ENCODE measurements at regions of chr1 and their contacts with region 1.

Region 1: DNA sequence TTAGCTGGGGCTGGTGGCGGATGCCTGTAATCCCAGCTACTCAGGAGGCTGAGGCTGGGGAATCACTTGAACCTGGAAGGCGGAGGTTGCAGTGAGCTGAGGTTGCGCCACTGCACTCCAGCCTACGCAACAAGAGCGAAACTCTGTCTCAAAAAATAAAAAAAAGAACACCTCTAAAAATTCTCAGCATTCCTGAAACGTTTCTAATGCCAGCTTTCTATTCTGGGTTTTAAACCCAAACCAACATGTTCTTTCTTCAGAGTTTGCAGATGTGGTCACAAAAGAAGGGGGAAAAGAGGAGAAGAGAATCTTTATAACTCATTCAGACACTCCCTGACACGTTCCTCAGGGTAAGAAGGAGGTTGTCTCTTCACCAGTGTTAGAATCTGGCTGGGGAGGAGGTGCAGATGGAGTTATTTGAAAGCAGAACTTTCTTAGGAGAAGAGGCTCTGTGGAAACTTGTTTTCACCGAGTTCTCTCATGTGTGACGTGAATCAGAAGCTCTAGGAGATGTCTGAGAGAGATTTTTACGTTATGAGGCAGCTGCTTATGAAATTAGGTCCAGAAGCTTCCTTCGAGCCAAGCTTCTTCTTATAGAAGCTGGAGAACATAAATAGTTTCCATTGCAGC is 17.8 kb upstream of the CNR2 start:
- DNase-seq: peak; percentile 65
- ATAC-seq: peak; percentile 83
- H3K4me3 ChIP-seq: peak overlapping the region in 4 of 5 experiments; percentile 2 to 60 (median 28)
- H3K4me3 Mint-ChIP-seq: peak overlapping the region; percentile 85
- H3K27ac ChIP-seq: peak overlapping the region; percentile 46 to 76
- H3K27ac Mint-ChIP-seq: peak overlapping the region; percentile 98
- H3K4me1 ChIP-seq: peaks cover 22 to 37% of the 10 kb centered on the region in 2 donors
- H3K4me1 Mint-ChIP-seq: peaks cover 38% of the 10 kb centered on the region
- H3K27me3 ChIP-seq: no peaks in the 10 kb centered on the region
- H3K27me3 Mint-ChIP-seq: no peaks in the 10 kb centered on the region
- CTCF ChIP-seq: no peak

Region 2: GRCh38 chr1:23838401-23838866 is 92.5 kb before region 1 on chr1:
- CTCF ChIA-PET with region 1: no interaction called
- POLR2A ChIA-PET with region 1: no interaction called
- intact Hi-C with region 1: no loop called
- DNase-seq: peak; percentile 89
- ATAC-seq: peak; percentile 100
- H3K4me3 ChIP-seq: peak overlapping the region in 4 of 5 experiments; percentile 19 to 60 (median 40)
- H3K4me3 Mint-ChIP-seq: peak overlapping the region; percentile 88
- H3K27ac ChIP-seq: no peak overlapping the region
- H3K27ac Mint-ChIP-seq: peak overlapping the region; percentile 83
- H3K4me1 ChIP-seq: peaks cover 6 to 7% of the 10 kb centered on the region in 2 donors
- H3K4me1 Mint-ChIP-seq: peaks cover 11% of the 10 kb centered on the region
- H3K27me3 ChIP-seq: no peaks in the 10 kb centered on the region
- H3K27me3 Mint-ChIP-seq: no peaks in the 10 kb centered on the region
- CTCF ChIP-seq: peak; percentile 3

Region 3: DNA sequence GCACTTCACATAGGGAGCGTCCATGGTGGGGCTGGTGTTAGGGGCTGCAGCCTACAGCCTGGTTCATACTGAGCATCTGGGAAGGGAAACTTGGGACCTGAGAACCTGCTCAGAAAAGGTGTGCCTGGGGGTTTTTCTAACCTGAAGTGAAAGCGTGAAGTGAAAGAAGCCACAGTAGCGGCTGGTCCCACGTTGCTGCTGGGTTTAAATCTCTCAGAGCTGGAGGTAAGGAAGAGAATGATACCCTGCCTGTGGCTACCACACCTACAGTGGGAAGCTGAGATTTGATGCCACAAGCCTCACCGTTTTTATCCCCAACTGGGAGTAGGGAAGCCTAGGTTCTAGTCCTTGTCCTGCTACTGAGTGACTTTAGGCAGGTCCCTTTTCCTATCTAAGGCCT is 41.9 kb before region 1 on chr1:
- CTCF ChIA-PET with region 1: interaction called, 4 read pairs
- POLR2A ChIA-PET with region 1: interaction called, 3 read pairs
- intact Hi-C with region 1: loop called (anchors 1 kb)
- DNase-seq: peak; percentile 78
- ATAC-seq: peak; percentile 62
- H3K4me3 ChIP-seq: peak overlapping the region in 1 of 5 experiments; percentile 60
- H3K4me3 Mint-ChIP-seq: peak overlapping the region; percentile 81
- H3K27ac ChIP-seq: peak overlapping the region; percentile 70 to 82
- H3K27ac Mint-ChIP-seq: peak overlapping the region; percentile 88
- H3K4me1 ChIP-seq: peaks cover 68 to 74% of the 10 kb centered on the region in 2 donors
- H3K4me1 Mint-ChIP-seq: peaks cover 72% of the 10 kb centered on the region
- H3K27me3 ChIP-seq: no peaks in the 10 kb centered on the region
- H3K27me3 Mint-ChIP-seq: no peaks in the 10 kb centered on the region
- CTCF ChIP-seq: no peak

Region 4: GRCh38 chr1:23908493-23909341 is 22.3 kb before region 1 on chr1:
- CTCF ChIA-PET with region 1: interaction called, 14 read pairs
- POLR2A ChIA-PET with region 1: interaction called, 14 read pairs
- intact Hi-C with region 1: loop called (anchors 1 kb)
- DNase-seq: peak; percentile 80
- ATAC-seq: peak; percentile 58
- H3K4me3 ChIP-seq: peak overlapping the region; percentile 53 to 94 (median 77)
- H3K4me3 Mint-ChIP-seq: peak overlapping the region; percentile 99
- H3K27ac ChIP-seq: peak overlapping the region; percentile 83 to 93
- H3K27ac Mint-ChIP-seq: peak overlapping the region; percentile 99
- H3K4me1 ChIP-seq: peaks cover 77 to 91% of the 10 kb centered on the region in 2 donors
- H3K4me1 Mint-ChIP-seq: peaks cover 86% of the 10 kb centered on the region
- H3K27me3 ChIP-seq: no peaks in the 10 kb centered on the region
- H3K27me3 Mint-ChIP-seq: no peaks in the 10 kb centered on the region
- CTCF ChIP-seq: no peak

Region 5: DNA sequence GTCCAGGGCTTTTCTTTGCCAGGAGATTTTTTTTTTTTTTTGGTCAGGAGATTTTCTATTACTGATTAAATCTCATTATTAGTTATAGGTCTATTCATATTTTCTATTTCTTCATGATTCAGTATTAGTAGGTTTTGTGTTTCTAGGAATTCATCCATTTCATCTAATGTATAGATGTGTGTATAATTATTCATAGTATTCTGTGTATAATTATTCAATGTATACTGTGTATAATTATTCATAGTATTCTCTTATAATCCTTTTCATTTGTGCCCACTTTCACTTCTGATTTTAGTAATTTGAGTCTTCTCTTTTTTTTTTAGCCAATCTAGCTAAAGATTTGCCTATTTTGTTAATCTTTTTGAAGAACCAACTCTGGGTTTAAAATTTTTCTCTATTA is 16.4 kb after region 1 on chr1:
- CTCF ChIA-PET with region 1: interaction called, 9 read pairs
- POLR2A ChIA-PET with region 1: interaction called, 5 read pairs
- intact Hi-C with region 1: loop called (anchors 1 kb)
- DNase-seq: no peak
- ATAC-seq: no peak
- H3K4me3 ChIP-seq: no peak overlapping the region
- H3K4me3 Mint-ChIP-seq: no peak overlapping the region
- H3K27ac ChIP-seq: no peak overlapping the region
- H3K27ac Mint-ChIP-seq: no peak overlapping the region
- H3K4me1 ChIP-seq: peaks cover 17 to 24% of the 10 kb centered on the region in 2 donors
- H3K4me1 Mint-ChIP-seq: peaks cover 18% of the 10 kb centered on the region
- H3K27me3 ChIP-seq: no peaks in the 10 kb centered on the region
- H3K27me3 Mint-ChIP-seq: no peaks in the 10 kb centered on the region
- CTCF ChIP-seq: no peak

Region 6: DNA sequence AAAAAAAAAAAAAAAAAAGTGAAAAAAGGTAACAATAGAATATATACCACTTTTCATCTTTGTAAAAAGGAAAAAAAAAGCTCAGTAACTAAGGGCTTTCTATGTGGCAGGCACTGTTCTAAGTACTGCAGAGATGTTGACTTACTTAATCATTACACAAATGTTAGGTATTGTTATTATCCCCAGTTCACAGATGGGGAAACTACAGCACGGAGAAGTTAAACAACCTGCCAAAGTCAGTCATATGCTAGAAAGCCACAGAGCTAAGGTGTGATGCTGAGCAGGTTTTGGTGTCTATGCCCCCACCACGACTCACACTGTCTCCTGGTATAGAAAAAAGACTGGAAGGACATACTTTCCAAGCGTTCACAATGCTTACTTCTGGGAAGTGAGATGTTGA is 22.0 kb after region 1 on chr1:
- CTCF ChIA-PET with region 1: interaction called, 34 read pairs
- POLR2A ChIA-PET with region 1: interaction called, 36 read pairs
- intact Hi-C with region 1: no loop called
- DNase-seq: no peak
- ATAC-seq: no peak
- H3K4me3 ChIP-seq: no peak overlapping the region
- H3K4me3 Mint-ChIP-seq: no peak overlapping the region
- H3K27ac ChIP-seq: peak overlapping the region in 1 of 2 donors; percentile 15
- H3K27ac Mint-ChIP-seq: peak overlapping the region; percentile 46
- H3K4me1 ChIP-seq: peaks cover 33 to 38% of the 10 kb centered on the region in 2 donors
- H3K4me1 Mint-ChIP-seq: peaks cover 43% of the 10 kb centered on the region
- H3K27me3 ChIP-seq: no peaks in the 10 kb centered on the region
- H3K27me3 Mint-ChIP-seq: no peaks in the 10 kb centered on the region
- CTCF ChIP-seq: no peak

Region 7: GRCh38 chr1:24126018-24126671 is 195.2 kb after region 1 on chr1:
- CTCF ChIA-PET with region 1: no interaction called
- POLR2A ChIA-PET with region 1: no interaction called
- intact Hi-C with region 1: no loop called
- DNase-seq: no peak
- ATAC-seq: no peak
- H3K4me3 ChIP-seq: no peak overlapping the region
- H3K4me3 Mint-ChIP-seq: no peak overlapping the region
- H3K27ac ChIP-seq: no peak overlapping the region
- H3K27ac Mint-ChIP-seq: no peak overlapping the region
- H3K4me1 ChIP-seq: no peaks in the 10 kb centered on the region
- H3K4me1 Mint-ChIP-seq: no peaks in the 10 kb centered on the region
- H3K27me3 ChIP-seq: no peaks in the 10 kb centered on the region
- H3K27me3 Mint-ChIP-seq: peaks cover 9% of the 10 kb centered on the region
- CTCF ChIP-seq: no peak

Measured in B cell (primary cell).